Left cardiac atrium (tissue), 4 donors: ENCODE measurements at regions of chr10 and their contacts with region 1.

Region 1: DNA sequence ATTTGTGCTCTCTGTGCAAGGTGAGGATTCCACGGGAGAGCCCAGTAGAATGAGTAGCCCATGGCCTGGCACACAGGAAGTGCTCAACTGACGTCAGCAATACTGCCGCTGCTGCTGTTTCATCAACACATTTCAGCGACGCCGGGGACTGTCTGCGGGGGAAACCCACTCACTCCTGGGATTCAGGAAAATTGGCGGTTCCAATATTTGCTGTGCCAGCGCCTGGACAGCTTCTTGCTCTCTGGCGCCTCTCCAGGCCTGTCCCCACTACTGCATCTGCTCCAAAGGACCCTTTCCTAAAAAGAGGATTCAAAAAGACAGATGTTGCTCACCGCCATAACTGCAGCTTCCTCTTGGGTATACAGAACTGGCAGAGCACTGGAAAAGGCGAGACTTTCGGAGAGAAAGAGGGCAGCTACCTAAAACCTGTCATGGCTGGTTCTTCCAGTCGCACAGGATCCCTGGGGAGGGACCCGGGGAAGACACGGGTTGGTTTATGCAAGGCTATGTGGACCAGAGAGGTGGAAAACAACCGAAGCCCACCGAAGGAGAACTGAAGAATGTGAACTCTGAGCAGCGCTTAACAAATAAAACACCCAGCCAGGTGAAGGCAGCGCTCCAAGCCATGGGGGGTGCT is 39.7 kb upstream of the ENO4 start:
- DNase-seq: no peak
- ATAC-seq: no peak

Region 2: GRCh38 chr10:117005027-117005526 is 195.5 kb after region 1 on chr10 and contains the start of gene SHTN1:
- intact Hi-C with region 1: loop called in 1 of 2 experiments (anchors 5 kb)
- DNase-seq: peak; percentile 65
- ATAC-seq: peak; percentile 82 to 95
- total RNA-seq, gene SHTN1: 7.0 to 10.7 TPM